HEK293T (cell line): ENCODE measurements at regions of chr14 and their contacts with region 1.

Region 1: GRCh38 chr14:23301288-23301968 is 1.2 kb downstream of the PPP1R3E start:
- DNase-seq: peak; percentile 93

Region 2: GRCh38 chr14:23259426-23259825 is 42.0 kb before region 1 on chr14:
- CTCF ChIA-PET with region 1: interaction called, 4 read pairs
- POLR2A ChIA-PET with region 1: interaction called, 11 read pairs
- DNase-seq: no peak

Region 3: DNA sequence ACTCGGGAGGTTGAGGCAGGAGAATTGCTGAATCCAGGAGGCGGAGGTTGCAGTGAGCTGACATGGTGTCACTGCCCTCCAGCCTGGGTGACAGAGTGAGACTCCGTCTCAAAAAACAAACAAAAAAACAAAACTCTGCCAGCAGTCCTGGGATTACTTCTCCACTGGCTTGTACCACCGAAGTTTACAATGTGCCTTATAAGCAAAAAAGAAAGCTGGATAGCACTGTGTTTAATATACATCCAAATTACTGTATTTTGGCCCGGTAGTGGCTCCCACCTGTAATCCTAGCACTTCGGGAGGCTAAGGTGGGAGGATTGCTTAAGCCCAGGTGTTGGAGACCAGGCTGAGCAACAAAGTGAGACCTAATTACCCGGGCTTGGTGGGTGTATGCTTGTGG is 32.2 kb before region 1 on chr14:
- CTCF ChIA-PET with region 1: no interaction called
- POLR2A ChIA-PET with region 1: interaction called, 18 read pairs
- DNase-seq: no peak

Region 4: GRCh38 chr14:23286020-23286905 is 15.2 kb before region 1 on chr14 and contains the start of gene HOMEZ:
- CTCF ChIA-PET with region 1: interaction called, 5 read pairs
- POLR2A ChIA-PET with region 1: interaction called, 46 read pairs
- DNase-seq: peak; percentile 92

Region 5: DNA sequence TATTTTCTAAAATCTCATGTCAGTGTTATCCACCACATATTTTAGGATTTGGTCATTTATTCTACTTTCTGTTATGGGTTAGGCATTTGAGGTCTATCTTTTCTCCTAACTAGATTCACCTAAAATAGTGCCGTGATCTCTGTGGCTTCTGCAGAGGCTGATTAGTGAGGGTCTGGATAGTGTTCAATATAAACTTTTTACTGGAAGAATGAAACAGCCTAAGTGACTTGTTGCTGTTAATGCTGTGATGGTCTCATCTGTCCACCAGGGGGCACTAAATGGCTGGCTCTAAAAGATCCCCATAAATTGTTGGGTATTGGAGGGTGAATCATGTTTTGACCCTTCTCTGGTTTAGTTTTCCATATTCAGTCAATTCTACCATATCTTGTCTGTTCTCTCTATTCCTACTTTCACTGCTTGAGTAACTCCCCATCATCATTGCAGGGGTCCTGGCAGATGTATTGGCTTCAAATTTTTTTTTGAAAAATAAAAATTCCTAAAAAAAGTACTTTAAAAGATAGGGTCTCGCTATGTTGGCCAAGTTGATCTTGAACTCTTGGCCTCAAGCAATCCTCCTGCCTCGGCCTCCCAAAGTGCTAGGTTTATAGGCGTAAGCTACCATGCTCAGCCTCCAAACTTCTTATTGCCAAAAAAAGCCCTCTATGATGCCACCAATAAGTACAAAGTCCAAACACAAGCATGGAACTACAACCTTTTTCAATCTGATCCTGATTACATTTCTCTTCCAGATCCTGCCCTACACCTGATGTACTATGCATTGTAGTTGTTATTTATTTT is 26.7 kb after region 1 on chr14:
- CTCF ChIA-PET with region 1: no interaction called
- POLR2A ChIA-PET with region 1: interaction called, 256 read pairs
- DNase-seq: peak; percentile 69